ENCODE measurements at regions of chr2 and their contacts with region 1.

Region 1: GRCh38 chr2:161238560-161239325 is 69.5 kb upstream of the PSMD14 start:
- DNase-seq: peak; percentile 35
- H3K4me3 ChIP-seq: peak overlapping the region; percentile 57
- H3K27ac ChIP-seq: no peak overlapping the region
- H3K4me1 ChIP-seq: peaks cover 56% of the 10 kb centered on the region
- CTCF ChIP-seq: no peak

Region 2: DNA sequence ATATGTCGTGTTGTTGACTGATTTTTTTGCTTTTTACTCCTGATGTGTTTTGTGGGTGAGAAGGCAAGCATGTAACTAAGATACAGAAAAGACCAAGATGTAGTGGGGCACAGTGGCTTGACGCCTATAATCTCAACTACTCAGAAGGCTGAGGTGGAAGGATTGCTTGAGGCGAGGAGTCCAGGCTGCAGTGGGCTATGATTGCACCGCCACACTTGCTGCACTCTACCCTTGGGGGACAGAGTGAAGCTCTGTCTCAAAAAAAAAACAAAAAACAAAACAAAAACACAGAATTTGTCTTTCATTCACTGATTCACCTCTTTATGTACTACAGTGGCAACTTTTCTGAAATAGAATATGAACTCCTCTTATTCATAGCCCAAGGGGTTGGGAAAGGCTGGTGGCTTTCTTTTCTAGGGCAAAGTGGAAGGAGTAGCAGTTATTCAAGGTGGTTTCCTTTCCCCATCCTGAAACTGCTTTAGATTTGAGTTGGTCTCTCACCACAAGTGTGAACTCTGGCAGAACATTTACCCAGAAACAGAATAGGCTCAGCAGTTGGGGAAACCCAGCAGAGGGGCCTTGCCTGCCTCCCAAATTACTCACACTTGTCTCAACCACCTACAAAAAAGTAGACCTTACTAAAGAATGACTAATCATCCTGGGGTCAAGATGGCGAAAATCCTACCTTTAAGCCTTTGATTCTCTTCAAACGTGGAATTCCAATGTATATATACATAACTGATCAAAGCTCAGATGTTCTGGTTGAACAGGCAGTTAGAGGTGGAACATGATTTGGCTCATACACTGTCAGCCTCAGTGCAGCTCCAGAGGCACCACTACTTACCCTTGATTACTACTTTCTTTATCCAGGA is 72.0 kb before region 1 on chr2:
- CTCF ChIA-PET with region 1: no interaction called
- POLR2A ChIA-PET with region 1: interaction called, 3 read pairs
- intact Hi-C with region 1: loop called (anchors 1 kb)
- DNase-seq: no peak
- H3K4me3 ChIP-seq: no peak overlapping the region
- H3K27ac ChIP-seq: no peak overlapping the region
- H3K4me1 ChIP-seq: peaks cover 54% of the 10 kb centered on the region
- CTCF ChIP-seq: no peak

Region 3: GRCh38 chr2:161250864-161251436 is 12.2 kb after region 1 on chr2:
- CTCF ChIA-PET with region 1: interaction called, 3 read pairs
- POLR2A ChIA-PET with region 1: interaction called, 10 read pairs
- intact Hi-C with region 1: no loop called
- DNase-seq: peak; percentile 70
- H3K4me3 ChIP-seq: no peak overlapping the region
- H3K27ac ChIP-seq: no peak overlapping the region
- H3K4me1 ChIP-seq: peaks cover 15% of the 10 kb centered on the region
- CTCF ChIP-seq: peak; percentile 89

Region 4: DNA sequence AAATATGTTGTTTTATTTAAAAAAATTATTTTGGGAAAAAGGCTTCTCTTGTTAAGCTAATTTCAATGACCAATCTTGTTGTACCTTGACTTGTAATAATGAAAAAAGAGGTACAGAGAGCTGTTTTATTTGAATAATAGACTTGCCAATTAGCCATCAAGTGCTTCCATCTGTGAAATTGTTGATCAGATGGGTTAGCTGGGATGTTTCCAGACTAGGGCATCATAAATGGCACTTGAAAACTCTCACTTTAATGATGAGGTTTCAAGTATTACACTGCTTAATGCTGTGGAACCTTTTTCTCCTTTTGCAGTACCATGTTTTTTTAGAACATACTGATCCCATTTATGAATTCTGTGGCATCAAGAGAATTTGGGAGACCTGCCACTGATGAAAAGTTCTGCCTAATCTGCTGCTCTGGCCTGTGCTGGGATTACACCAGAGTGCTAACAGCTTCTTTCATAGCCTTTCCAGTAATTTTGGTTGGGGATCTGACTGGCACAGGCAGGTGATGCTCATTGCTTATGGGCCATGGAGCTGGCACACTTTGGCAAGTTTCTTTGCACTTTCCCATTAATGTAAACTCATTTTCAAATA is 93.7 kb after region 1 on chr2:
- CTCF ChIA-PET with region 1: no interaction called
- POLR2A ChIA-PET with region 1: no interaction called
- intact Hi-C with region 1: no loop called
- DNase-seq: no peak
- H3K4me3 ChIP-seq: no peak overlapping the region
- H3K27ac ChIP-seq: no peak overlapping the region
- H3K4me1 ChIP-seq: no peaks in the 10 kb centered on the region
- CTCF ChIP-seq: no peak

Measured in OCI-LY7 (cell line).